ENCODE measurements at regions of chr3 and their contacts with region 1.

Region 1: DNA sequence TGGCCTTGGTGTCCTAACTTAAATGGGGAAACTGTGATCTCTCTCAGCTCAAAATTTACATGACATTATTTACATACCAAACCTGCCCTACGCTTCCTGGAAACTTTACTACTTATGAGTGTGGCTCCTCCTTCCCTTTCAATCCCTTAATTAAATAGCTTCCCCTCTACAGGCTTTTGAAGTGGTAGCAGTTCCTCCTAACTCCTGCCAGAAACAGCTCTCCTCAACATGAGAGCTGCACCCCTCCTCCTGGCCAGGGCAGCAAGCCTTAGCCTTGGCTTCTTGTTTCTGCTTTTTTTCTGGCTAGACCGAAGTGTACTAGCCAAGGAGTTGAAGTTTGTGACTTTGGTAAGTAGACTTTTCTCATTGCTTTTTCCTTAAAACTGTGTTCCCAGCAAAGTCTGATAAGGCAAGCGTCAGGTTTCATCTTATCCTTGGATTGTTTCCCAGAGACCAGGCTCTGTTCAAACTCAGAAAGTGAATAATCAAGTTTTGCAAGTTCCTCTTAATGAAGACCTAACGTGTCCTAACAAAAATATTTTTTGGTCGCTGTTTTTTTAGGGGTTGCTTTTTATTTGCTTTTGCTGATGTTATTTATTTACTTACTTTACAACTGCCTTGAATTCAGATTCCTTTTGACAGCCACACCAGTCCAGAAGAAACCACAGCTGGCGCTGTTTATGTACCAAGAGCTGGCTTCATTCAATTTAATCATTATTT is at the start of gene ACP3:
- DNase-seq: peak; percentile 82
- ATAC-seq: peak; percentile 76
- H3K4me3 ChIP-seq: peak within 1 kb of the TSS; percentile 5; the same call in 1 of the 2 replicates
- H3K27ac ChIP-seq: peak within 1 kb of the TSS; percentile 82
- H3K4me1 ChIP-seq: no peaks in the 10 kb centered on the region
- H3K27me3 ChIP-seq: no peaks in the 10 kb centered on the region
- CTCF ChIP-seq: no peak
- POLR2A ChIP-seq: no peak
- RAD21 ChIP-seq: no peak
- total RNA-seq, gene ACP3: 0.28 and 0.54 TPM in 2 replicates

Region 2: GRCh38 chr3:132253262-132253878 is 64.0 kb before region 1 on chr3:
- CTCF ChIA-PET with region 1: interaction called, 6 read pairs
- POLR2A ChIA-PET with region 1: no interaction called
- dilution Hi-C with region 1: no loop called
- in situ Hi-C with region 1: no loop called
- intact Hi-C with region 1: loop called (anchors 1 kb)
- DNase-seq: peak; percentile 76
- ATAC-seq: peak; percentile 55
- H3K4me3 ChIP-seq: no peak overlapping the region
- H3K27ac ChIP-seq: no peak overlapping the region
- H3K4me1 ChIP-seq: peaks cover 8% of the 10 kb centered on the region
- H3K27me3 ChIP-seq: no peaks in the 10 kb centered on the region; the same call in 1 of the 2 replicates
- CTCF ChIP-seq: peak; percentile 89
- POLR2A ChIP-seq: no peak
- RAD21 ChIP-seq: peak; percentile 68

Region 3: GRCh38 chr3:132273036-132273435 is 44.4 kb before region 1 on chr3:
- CTCF ChIA-PET with region 1: interaction called, 5 read pairs
- POLR2A ChIA-PET with region 1: no interaction called
- dilution Hi-C with region 1: no loop called
- in situ Hi-C with region 1: no loop called
- intact Hi-C with region 1: loop called (anchors 2 kb)
- DNase-seq: no peak
- ATAC-seq: no peak
- H3K4me3 ChIP-seq: no peak overlapping the region
- H3K27ac ChIP-seq: no peak overlapping the region
- H3K4me1 ChIP-seq: no peaks in the 10 kb centered on the region
- H3K27me3 ChIP-seq: no peaks in the 10 kb centered on the region
- CTCF ChIP-seq: no peak
- POLR2A ChIP-seq: no peak
- RAD21 ChIP-seq: no peak

Measured in IMR-90 (cell line).